ENCODE measurements at regions of chr15 and their contacts with region 1.

Region 1: GRCh38 chr15:62649793-62650420 is 392.6 kb upstream of the TPM1 start:
- DNase-seq: peak in 1 of 2 donors; percentile 53
- H3K4me3 ChIP-seq: no peak overlapping the region
- H3K27ac ChIP-seq: no peak overlapping the region
- H3K4me1 ChIP-seq: no peaks in the 10 kb centered on the region
- H3K27me3 ChIP-seq: no peaks in the 10 kb centered on the region
- CTCF ChIP-seq: no peak

Region 2: GRCh38 chr15:62389885-62390790 is 259.8 kb before region 1 on chr15:
- intact Hi-C with region 1: loop called (anchors 5 kb)
- DNase-seq: peak; percentile 43 to 82
- H3K4me3 ChIP-seq: peak within 1 kb of the TSS; percentile 72 to 89
- H3K27ac ChIP-seq: peak within 1 kb of the TSS; percentile 79
- H3K4me1 ChIP-seq: peaks cover 0 to 35% (median 11%) of the 10 kb centered on the region in 4 donors
- H3K27me3 ChIP-seq: no peaks in the 10 kb centered on the region
- CTCF ChIP-seq: peak in 1 of 2 experiments; percentile 5

Measured in tibial artery (tissue), 4 donors.